PC-9 (cell line): ENCODE measurements at regions of chr3 and their contacts with region 1.

Region 1: DNA sequence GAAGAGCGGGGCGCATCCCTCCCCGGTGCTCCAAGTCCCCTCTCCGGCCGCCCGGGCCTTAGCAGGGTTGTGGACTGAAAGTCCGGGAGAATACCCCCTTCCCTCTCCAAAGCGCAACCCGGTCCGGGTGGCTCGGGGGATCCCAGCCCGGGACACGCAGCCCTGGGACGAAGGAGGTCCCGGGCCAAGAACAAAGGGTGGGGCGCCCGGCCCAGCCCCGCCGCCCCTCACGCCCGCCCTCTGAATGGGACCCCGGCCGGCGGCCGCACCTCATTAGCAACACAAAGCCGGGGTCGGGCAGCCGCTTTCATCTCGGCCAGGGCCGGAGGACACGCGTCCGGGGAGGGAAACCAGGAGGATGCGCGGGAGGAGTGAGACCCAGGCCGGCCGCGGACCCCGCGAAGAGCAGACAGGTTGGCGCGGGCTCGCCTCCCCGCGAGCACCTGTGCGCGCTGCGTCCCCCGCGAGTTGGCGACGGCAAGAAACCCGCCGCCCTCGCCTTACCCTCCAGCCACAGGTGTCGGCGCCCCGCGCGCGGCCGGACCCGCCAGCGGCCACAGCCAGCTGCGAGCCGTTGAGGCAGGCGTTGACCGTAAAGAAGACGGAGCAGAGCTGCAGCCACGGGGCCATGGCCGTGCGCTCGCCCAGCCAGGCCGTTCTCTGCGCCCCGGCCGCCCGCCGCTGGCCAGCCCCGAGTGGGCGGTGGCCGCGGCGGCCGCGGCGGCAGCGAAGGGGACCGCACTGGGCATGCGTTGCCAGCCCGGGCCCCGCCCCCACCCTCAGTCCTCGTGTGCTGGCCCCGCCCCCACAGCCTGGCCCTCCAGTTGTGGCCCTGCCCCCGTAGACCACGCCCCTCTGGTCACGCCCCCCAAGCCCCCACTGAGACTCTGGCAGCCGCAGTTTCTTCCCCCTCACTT is at the start of gene IL17RD:
- DNase-seq: peak; percentile 59 to 72
- H3K4me3 ChIP-seq: peak within 1 kb of the TSS; percentile 69
- H3K27ac ChIP-seq: no peak within 1 kb of the TSS
- H3K4me1 ChIP-seq: no peaks in the 10 kb centered on the region; the same call in 1 of the 2 replicates
- H3K27me3 ChIP-seq: no peaks in the 10 kb centered on the region
- CTCF ChIP-seq: no peak
- total RNA-seq, gene IL17RD: 7.9 and 8.3 TPM in 2 replicates

Region 2: DNA sequence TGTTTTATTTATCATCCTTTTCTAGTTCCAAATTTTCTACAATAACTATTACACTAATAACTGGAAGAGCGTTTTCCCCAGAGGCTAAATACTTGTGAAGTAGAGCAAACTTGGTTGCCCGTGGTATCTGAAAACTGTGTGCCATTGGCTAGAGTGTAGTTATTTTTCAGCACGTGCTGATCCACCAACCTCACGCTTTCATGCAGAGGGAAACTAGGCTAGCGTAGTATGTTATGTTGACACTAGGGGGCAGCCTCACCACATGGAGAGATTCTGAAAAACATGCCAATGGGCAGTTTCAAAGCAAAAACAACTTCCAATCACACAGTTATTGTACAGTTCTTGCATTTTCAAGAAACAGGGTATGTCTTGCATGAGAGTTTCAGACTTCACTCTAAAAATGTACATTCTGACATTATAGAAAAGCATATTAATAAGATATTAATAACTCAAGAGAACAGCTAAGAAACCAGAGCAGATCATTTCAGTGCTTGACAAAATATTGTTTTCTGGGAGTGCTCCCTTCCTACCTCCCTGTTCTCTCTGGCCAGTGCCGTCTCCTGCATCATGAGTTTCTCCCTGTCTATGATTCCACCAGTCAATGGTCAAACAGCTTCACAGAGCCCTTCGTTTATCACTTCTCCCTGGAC is 64.7 kb before region 1 on chr3:
- CTCF ChIA-PET with region 1: no interaction called
- POLR2A ChIA-PET with region 1: no interaction called
- intact Hi-C with region 1: loop called (anchors 2 kb)
- DNase-seq: peak; percentile 48 to 63
- H3K4me3 ChIP-seq: no peak overlapping the region
- H3K27ac ChIP-seq: 0 out of 2 replicates have a peak overlapping the region, but pooled peaks have one; percentile 62
- H3K4me1 ChIP-seq: peaks cover 20% of the 10 kb centered on the region
- H3K27me3 ChIP-seq: no peaks in the 10 kb centered on the region
- CTCF ChIP-seq: peak; percentile 85